ENCODE measurements at regions of chr3 and their contacts with region 1.

Region 1: GRCh38 chr3:62188681-62189383 is 184.5 kb downstream of the FEZF2 start:
- DNase-seq: peak; percentile 80
- H3K4me3 ChIP-seq: no peak overlapping the region
- H3K27ac ChIP-seq: no peak overlapping the region
- H3K4me1 ChIP-seq: peaks cover 5% of the 10 kb centered on the region
- H3K27me3 ChIP-seq: no peaks in the 10 kb centered on the region
- CTCF ChIP-seq: peak; percentile 75 to 84
- POLR2A ChIP-seq: no peak

Region 2: DNA sequence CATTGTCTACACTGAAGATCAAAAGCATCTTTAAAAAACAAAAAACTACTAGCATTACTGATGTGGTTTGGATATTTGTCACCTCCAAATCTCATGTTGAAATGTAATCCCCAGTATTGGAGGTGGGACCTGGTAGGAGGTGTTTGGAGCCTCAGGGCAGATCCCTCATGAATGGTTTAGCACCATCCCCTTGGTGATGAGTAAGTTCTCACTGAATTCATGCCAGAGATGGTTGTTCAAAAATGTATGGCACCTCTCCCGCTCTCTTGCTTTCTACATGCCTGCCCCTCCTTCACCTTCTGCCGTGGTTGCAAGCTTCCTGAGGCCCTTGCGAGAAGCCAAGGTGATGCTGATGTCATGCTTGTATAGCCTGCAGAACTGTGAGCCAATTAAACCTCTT is 801.0 kb before region 1 on chr3:
- CTCF ChIA-PET with region 1: no interaction called
- POLR2A ChIA-PET with region 1: no interaction called
- dilution Hi-C with region 1: no loop called
- intact Hi-C with region 1: loop called (anchors 5 kb)
- DNase-seq: no peak
- H3K4me3 ChIP-seq: no peak overlapping the region
- H3K27ac ChIP-seq: no peak overlapping the region
- H3K4me1 ChIP-seq: no peaks in the 10 kb centered on the region
- H3K27me3 ChIP-seq: no peaks in the 10 kb centered on the region
- CTCF ChIP-seq: no peak
- POLR2A ChIP-seq: no peak

Region 3: GRCh38 chr3:61858056-61858455 is 330.8 kb before region 1 on chr3:
- CTCF ChIA-PET with region 1: interaction called, 55 read pairs
- POLR2A ChIA-PET with region 1: interaction called, 6 read pairs
- dilution Hi-C with region 1: no loop called
- intact Hi-C with region 1: loop called (anchors 1 kb)
- DNase-seq: peak; percentile 57
- H3K4me3 ChIP-seq: no peak overlapping the region
- H3K27ac ChIP-seq: no peak overlapping the region
- H3K4me1 ChIP-seq: no peaks in the 10 kb centered on the region
- H3K27me3 ChIP-seq: no peaks in the 10 kb centered on the region
- CTCF ChIP-seq: peak; percentile 6 to 34
- POLR2A ChIP-seq: no peak

Region 4: DNA sequence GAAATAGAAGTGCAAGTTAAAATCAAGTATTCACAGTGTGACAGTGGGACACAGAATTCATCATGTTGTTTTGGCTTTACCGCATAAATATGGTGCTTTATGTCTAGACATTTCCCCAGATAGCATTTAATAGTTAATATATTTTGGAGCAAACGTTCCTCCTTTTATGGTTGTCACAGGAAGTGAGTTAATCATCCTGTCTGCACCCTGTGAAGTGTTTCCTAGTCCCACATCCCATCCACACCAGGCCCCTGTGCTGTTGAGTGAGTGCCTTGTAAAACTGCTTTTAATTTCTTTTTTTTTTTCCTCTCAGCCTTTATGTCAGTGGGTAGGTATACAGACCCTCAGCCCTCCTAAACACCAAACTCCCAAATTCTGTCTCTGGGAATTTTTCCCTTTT is 209.2 kb before region 1 on chr3:
- CTCF ChIA-PET with region 1: no interaction called
- POLR2A ChIA-PET with region 1: no interaction called
- dilution Hi-C with region 1: no loop called
- intact Hi-C with region 1: loop called (anchors 5 kb)
- DNase-seq: peak; percentile 80
- H3K4me3 ChIP-seq: no peak overlapping the region
- H3K27ac ChIP-seq: peak overlapping the region; percentile 85
- H3K4me1 ChIP-seq: peaks cover 35% of the 10 kb centered on the region
- H3K27me3 ChIP-seq: no peaks in the 10 kb centered on the region
- CTCF ChIP-seq: no peak
- POLR2A ChIP-seq: peak; percentile 64

Region 5: GRCh38 chr3:62131592-62131991 is 57.2 kb before region 1 on chr3:
- CTCF ChIA-PET with region 1: interaction called, 31 read pairs
- POLR2A ChIA-PET with region 1: no interaction called
- dilution Hi-C with region 1: no loop called
- intact Hi-C with region 1: loop called (anchors 1 kb)
- DNase-seq: peak; percentile 47
- H3K4me3 ChIP-seq: no peak overlapping the region
- H3K27ac ChIP-seq: no peak overlapping the region
- H3K4me1 ChIP-seq: peaks cover 11% of the 10 kb centered on the region
- H3K27me3 ChIP-seq: no peaks in the 10 kb centered on the region
- CTCF ChIP-seq: peak; percentile 17 to 37
- POLR2A ChIP-seq: no peak

Region 6: DNA sequence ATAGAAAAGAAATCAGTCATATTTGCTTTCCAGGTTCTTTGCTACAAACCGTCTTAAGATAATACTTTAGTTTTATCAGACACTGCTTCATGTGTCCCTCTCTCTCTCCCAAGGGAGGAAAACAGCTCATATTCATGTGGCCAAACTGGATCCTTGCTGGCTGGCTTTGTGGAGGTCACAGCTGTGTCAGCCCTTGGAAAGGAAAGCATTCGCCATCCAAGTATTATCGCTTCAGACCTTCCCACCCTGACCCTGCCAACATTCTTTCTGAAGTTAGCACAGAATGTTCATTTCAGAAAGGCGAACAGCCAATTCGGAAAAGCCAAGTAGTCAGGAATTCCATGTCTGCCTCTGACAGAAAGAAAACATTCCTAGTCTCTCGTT is 29.1 kb before region 1 on chr3:
- CTCF ChIA-PET with region 1: interaction called, 30 read pairs
- POLR2A ChIA-PET with region 1: no interaction called
- dilution Hi-C with region 1: no loop called
- intact Hi-C with region 1: loop called (anchors 1 kb)
- DNase-seq: peak; percentile 95
- H3K4me3 ChIP-seq: peak overlapping the region in 1 of 3 experiments; percentile 26
- H3K27ac ChIP-seq: peak overlapping the region; percentile 94
- H3K4me1 ChIP-seq: peaks cover 33% of the 10 kb centered on the region
- H3K27me3 ChIP-seq: no peaks in the 10 kb centered on the region
- CTCF ChIP-seq: no peak
- POLR2A ChIP-seq: no peak

Region 7: GRCh38 chr3:62201438-62202035 is 12.7 kb after region 1 on chr3:
- CTCF ChIA-PET with region 1: interaction called, 26 read pairs
- POLR2A ChIA-PET with region 1: interaction called, 3 read pairs
- dilution Hi-C with region 1: no loop called
- intact Hi-C with region 1: no loop called
- DNase-seq: peak; percentile 59
- H3K4me3 ChIP-seq: no peak overlapping the region
- H3K27ac ChIP-seq: no peak overlapping the region
- H3K4me1 ChIP-seq: no peaks in the 10 kb centered on the region
- H3K27me3 ChIP-seq: no peaks in the 10 kb centered on the region
- CTCF ChIP-seq: peak; percentile 36 to 40
- POLR2A ChIP-seq: no peak

Measured in endothelial cell of umbilical vein (primary cell).